CD4-positive, alpha-beta T cell (primary cell): ENCODE measurements at regions of chr17 and their contacts with region 1.

Region 1: DNA sequence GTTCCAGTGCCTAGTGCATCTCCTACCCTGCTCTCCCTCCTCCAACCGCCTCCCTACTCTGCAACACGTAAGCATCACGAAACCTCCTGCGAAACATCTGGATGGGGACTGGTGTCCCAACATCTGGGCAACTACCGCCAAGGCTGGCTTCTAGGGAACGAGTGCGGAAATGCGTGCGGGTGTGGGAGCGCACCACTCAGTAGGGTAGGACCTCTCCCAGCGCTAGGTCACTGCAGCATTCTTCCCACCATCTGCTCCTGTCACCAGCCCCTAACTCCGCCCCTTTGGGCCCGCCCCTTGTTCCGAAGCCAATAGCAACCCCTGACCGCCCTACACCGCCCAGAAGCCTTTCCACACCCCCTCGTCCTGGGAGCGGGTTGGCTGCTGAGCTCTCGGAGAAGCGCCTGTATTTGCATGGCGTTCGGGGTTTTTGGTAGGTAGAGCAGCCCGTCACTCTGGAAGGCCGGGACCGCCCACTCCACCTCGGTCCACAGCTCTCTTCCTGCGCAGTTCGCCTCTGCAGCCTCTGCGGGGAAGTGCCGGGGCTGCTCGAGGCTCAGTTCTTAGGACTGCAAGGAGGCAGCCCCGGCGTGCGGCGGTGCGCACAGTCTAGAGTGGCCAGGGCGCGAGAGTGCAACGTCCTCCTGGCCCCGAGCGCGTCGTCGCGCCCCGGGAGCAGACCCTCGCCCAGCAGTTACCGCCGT is at the start of gene HS3ST3B1:
- DNase-seq: peak; percentile 96 to 100 (median 99)
- ATAC-seq: peak; percentile 84
- H3K4me3 ChIP-seq: peak within 1 kb of the TSS; percentile 97
- H3K4me3 Mint-ChIP-seq: peak within 1 kb of the TSS; percentile 99
- H3K27ac ChIP-seq: peak within 1 kb of the TSS; percentile 68 to 73
- H3K27ac Mint-ChIP-seq: peak within 1 kb of the TSS; percentile 86
- H3K4me1 ChIP-seq: peaks cover 69% of the 10 kb centered on the region
- H3K4me1 Mint-ChIP-seq: peaks cover 68% of the 10 kb centered on the region
- H3K27me3 ChIP-seq: peaks cover 25 to 32% of the 10 kb centered on the region in 2 experiments
- H3K27me3 Mint-ChIP-seq: peaks cover 48% of the 10 kb centered on the region
- CTCF ChIP-seq: no peak
- total RNA-seq, gene HS3ST3B1: 9.3 to 11.5 TPM

Region 2: GRCh38 chr17:13017659-13018459 is 1282.9 kb before region 1 on chr17 and contains the start of gene ELAC2:
- CTCF ChIA-PET with region 1: interaction called, 5 read pairs
- POLR2A ChIA-PET with region 1: interaction called, 23 read pairs
- intact Hi-C with region 1: loop called (anchors 2 to 5 kb)
- DNase-seq: peak; percentile 90 to 98 (median 92)
- ATAC-seq: peak; percentile 99
- H3K4me3 ChIP-seq: peak within 1 kb of the TSS; percentile 84
- H3K4me3 Mint-ChIP-seq: peak within 1 kb of the TSS; percentile 100
- H3K27ac ChIP-seq: peak within 1 kb of the TSS; percentile 61 to 76
- H3K27ac Mint-ChIP-seq: peak within 1 kb of the TSS; percentile 93
- H3K4me1 ChIP-seq: peaks cover 26% of the 10 kb centered on the region
- H3K4me1 Mint-ChIP-seq: peaks cover 44% of the 10 kb centered on the region
- H3K27me3 ChIP-seq: no peaks in the 10 kb centered on the region
- H3K27me3 Mint-ChIP-seq: no peaks in the 10 kb centered on the region
- CTCF ChIP-seq: peak; percentile 17
- total RNA-seq, gene ELAC2: 51.6 to 53.3 TPM

Region 3: GRCh38 chr17:13594762-13595598 is 705.7 kb before region 1 on chr17:
- CTCF ChIA-PET with region 1: interaction called, 4 read pairs
- POLR2A ChIA-PET with region 1: interaction called, 4 read pairs
- intact Hi-C with region 1: loop called (anchors 1 kb)
- DNase-seq: peak; percentile 62 to 89 (median 78)
- ATAC-seq: peak; percentile 82
- H3K4me3 ChIP-seq: no peak overlapping the region
- H3K4me3 Mint-ChIP-seq: no peak overlapping the region
- H3K27ac ChIP-seq: no peak overlapping the region
- H3K27ac Mint-ChIP-seq: no peak overlapping the region
- H3K4me1 ChIP-seq: no peaks in the 10 kb centered on the region
- H3K4me1 Mint-ChIP-seq: peaks cover 6% of the 10 kb centered on the region
- H3K27me3 ChIP-seq: peaks cover 7 to 21% of the 10 kb centered on the region in 2 experiments
- H3K27me3 Mint-ChIP-seq: peaks cover 39% of the 10 kb centered on the region
- CTCF ChIP-seq: peak; percentile 85

Region 4: GRCh38 chr17:14196377-14196997 is 104.2 kb before region 1 on chr17:
- CTCF ChIA-PET with region 1: interaction called, 13 read pairs
- POLR2A ChIA-PET with region 1: interaction called, 111 read pairs
- intact Hi-C with region 1: loop called (anchors 1 to 5 kb)
- DNase-seq: peak in 4 of 14 experiments; percentile 30 to 57 (median 53)
- ATAC-seq: peak; percentile 21
- H3K4me3 ChIP-seq: no peak overlapping the region
- H3K4me3 Mint-ChIP-seq: peak overlapping the region; percentile 82
- H3K27ac ChIP-seq: peak overlapping the region; percentile 48 to 79
- H3K27ac Mint-ChIP-seq: peak overlapping the region; percentile 94
- H3K4me1 ChIP-seq: peaks cover 84% of the 10 kb centered on the region
- H3K4me1 Mint-ChIP-seq: peaks cover 92% of the 10 kb centered on the region
- H3K27me3 ChIP-seq: no peaks in the 10 kb centered on the region
- H3K27me3 Mint-ChIP-seq: no peaks in the 10 kb centered on the region
- CTCF ChIP-seq: peak; percentile 51

Region 5: GRCh38 chr17:14351493-14351892 is 50.8 kb after region 1 on chr17:
- CTCF ChIA-PET with region 1: no interaction called
- POLR2A ChIA-PET with region 1: no interaction called
- intact Hi-C with region 1: no loop called
- DNase-seq: peak in 2 of 14 experiments; percentile 38 to 66
- ATAC-seq: peak; percentile 32
- H3K4me3 ChIP-seq: no peak overlapping the region
- H3K4me3 Mint-ChIP-seq: no peak overlapping the region
- H3K27ac ChIP-seq: no peak overlapping the region
- H3K27ac Mint-ChIP-seq: peak overlapping the region; percentile 45
- H3K4me1 ChIP-seq: peaks cover 2% of the 10 kb centered on the region
- H3K4me1 Mint-ChIP-seq: peaks cover 5% of the 10 kb centered on the region
- H3K27me3 ChIP-seq: no peaks in the 10 kb centered on the region
- H3K27me3 Mint-ChIP-seq: no peaks in the 10 kb centered on the region
- CTCF ChIP-seq: no peak

Region 6: DNA sequence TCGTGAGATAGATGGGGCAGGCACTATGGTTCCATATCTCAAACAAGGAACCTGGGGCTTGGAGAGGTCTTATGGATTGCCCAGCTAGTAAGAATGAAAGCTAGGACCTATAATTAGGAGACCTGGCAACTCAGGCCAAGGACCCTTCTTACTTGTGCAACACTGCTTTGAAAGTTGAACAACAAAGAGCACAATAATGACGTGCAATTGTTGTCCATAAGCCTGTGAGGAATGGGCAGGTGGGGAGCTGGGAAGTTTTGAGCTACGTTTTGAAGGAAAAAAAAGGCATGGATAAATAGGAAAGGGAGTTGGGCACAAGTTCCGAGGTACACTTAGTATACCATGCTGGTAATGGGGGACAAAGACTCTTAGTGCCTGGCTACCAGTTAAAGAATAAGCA is 104.5 kb after region 1 on chr17:
- CTCF ChIA-PET with region 1: interaction called, 3 read pairs
- POLR2A ChIA-PET with region 1: interaction called, 31 read pairs
- intact Hi-C with region 1: no loop called
- DNase-seq: no peak
- ATAC-seq: no peak
- H3K4me3 ChIP-seq: no peak overlapping the region
- H3K4me3 Mint-ChIP-seq: no peak overlapping the region
- H3K27ac ChIP-seq: no peak overlapping the region
- H3K27ac Mint-ChIP-seq: peak overlapping the region; percentile 36
- H3K4me1 ChIP-seq: peaks cover 7% of the 10 kb centered on the region
- H3K4me1 Mint-ChIP-seq: peaks cover 27% of the 10 kb centered on the region
- H3K27me3 ChIP-seq: no peaks in the 10 kb centered on the region
- H3K27me3 Mint-ChIP-seq: no peaks in the 10 kb centered on the region
- CTCF ChIP-seq: no peak

Region 7: GRCh38 chr17:14553855-14554254 is 253.1 kb after region 1 on chr17:
- CTCF ChIA-PET with region 1: no interaction called
- POLR2A ChIA-PET with region 1: interaction called, 4 read pairs
- intact Hi-C with region 1: loop called in 1 of 2 experiments (anchors 5 kb)
- DNase-seq: peak in 3 of 14 experiments; percentile 18 to 19 (median 19)
- ATAC-seq: no peak
- H3K4me3 ChIP-seq: no peak overlapping the region
- H3K4me3 Mint-ChIP-seq: no peak overlapping the region
- H3K27ac ChIP-seq: no peak overlapping the region
- H3K27ac Mint-ChIP-seq: no peak overlapping the region
- H3K4me1 ChIP-seq: peaks cover 3% of the 10 kb centered on the region
- H3K4me1 Mint-ChIP-seq: peaks cover 5% of the 10 kb centered on the region
- H3K27me3 ChIP-seq: no peaks in the 10 kb centered on the region
- H3K27me3 Mint-ChIP-seq: no peaks in the 10 kb centered on the region
- CTCF ChIP-seq: peak; percentile 12

Region 8: GRCh38 chr17:14926526-14927122 is 625.9 kb after region 1 on chr17:
- CTCF ChIA-PET with region 1: no interaction called
- POLR2A ChIA-PET with region 1: no interaction called
- intact Hi-C with region 1: loop called (anchors 2 to 5 kb)
- DNase-seq: peak in 13 of 14 experiments; percentile 20 to 82 (median 42)
- ATAC-seq: no peak
- H3K4me3 ChIP-seq: no peak overlapping the region
- H3K4me3 Mint-ChIP-seq: no peak overlapping the region
- H3K27ac ChIP-seq: no peak overlapping the region
- H3K27ac Mint-ChIP-seq: no peak overlapping the region
- H3K4me1 ChIP-seq: no peaks in the 10 kb centered on the region
- H3K4me1 Mint-ChIP-seq: no peaks in the 10 kb centered on the region
- H3K27me3 ChIP-seq: peaks cover 5 to 10% of the 10 kb centered on the region in 2 experiments
- H3K27me3 Mint-ChIP-seq: peaks cover 22% of the 10 kb centered on the region
- CTCF ChIP-seq: peak; percentile 85